ENCODE measurements at regions of chr19 and their contacts with region 1.

Region 1: GRCh38 chr19:29873024-29873800 is 61.4 kb downstream of the CCNE1 start:
- DNase-seq: peak; percentile 57
- H3K4me3 ChIP-seq: peak overlapping the region; percentile 65
- H3K27ac ChIP-seq: no peak overlapping the region
- H3K4me1 ChIP-seq: no peaks in the 10 kb centered on the region
- CTCF ChIP-seq: peak; percentile 86

Region 2: GRCh38 chr19:29735800-29736199 is 137.4 kb before region 1 on chr19:
- CTCF ChIA-PET with region 1: no interaction called
- POLR2A ChIA-PET with region 1: no interaction called
- intact Hi-C with region 1: loop called (anchors 1 kb)
- DNase-seq: no peak
- H3K4me3 ChIP-seq: no peak overlapping the region
- H3K27ac ChIP-seq: no peak overlapping the region
- H3K4me1 ChIP-seq: no peaks in the 10 kb centered on the region
- CTCF ChIP-seq: no peak

Region 3: GRCh38 chr19:29760752-29761502 is 112.3 kb before region 1 on chr19:
- CTCF ChIA-PET with region 1: interaction called, 5 read pairs
- POLR2A ChIA-PET with region 1: no interaction called
- intact Hi-C with region 1: loop called (anchors 1 kb)
- DNase-seq: no peak
- H3K4me3 ChIP-seq: no peak overlapping the region
- H3K27ac ChIP-seq: no peak overlapping the region
- H3K4me1 ChIP-seq: peaks cover 4% of the 10 kb centered on the region
- CTCF ChIP-seq: no peak

Region 4: DNA sequence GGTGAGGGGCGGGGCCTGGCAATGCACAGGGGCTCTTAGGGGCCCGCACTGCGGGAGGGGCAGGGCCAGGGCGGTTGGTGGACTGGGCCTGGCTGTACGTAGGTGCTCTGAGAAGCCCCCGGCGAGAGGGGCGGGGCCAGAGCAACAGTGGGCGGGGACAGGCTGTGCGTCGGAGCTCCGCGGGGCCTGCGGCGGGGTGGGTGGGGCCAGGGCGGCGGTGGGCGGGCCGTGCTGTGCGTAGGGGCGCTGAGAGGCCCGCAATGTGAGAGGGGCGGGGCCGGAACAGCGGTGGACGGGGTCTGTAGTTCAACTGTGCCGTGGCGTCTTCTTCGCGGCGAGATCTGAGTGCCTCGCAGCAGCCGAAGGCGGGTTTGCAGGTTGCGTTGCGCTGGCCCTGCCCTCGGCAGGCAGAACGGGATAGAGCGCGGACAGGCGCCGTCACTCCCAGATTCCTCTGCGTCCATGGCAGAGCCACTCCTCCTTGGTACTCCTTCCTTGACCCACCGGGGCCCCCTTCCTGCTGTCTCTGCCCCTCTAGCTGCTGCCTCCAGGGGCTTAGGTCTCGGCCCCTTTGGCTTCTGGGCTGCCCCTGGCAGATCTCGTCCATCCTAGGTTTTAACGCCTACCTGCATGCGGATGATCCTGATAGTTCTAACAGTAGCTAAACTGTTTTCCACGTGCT is 28.2 kb before region 1 on chr19:
- CTCF ChIA-PET with region 1: interaction called, 12 read pairs
- POLR2A ChIA-PET with region 1: interaction called, 3 read pairs
- intact Hi-C with region 1: no loop called
- DNase-seq: peak; percentile 91
- H3K4me3 ChIP-seq: peak overlapping the region; percentile 73
- H3K27ac ChIP-seq: no peak overlapping the region
- H3K4me1 ChIP-seq: peaks cover 18% of the 10 kb centered on the region
- CTCF ChIP-seq: no peak